Heart right ventricle (tissue), 16 donors: ENCODE measurements at regions of chr2 and their contacts with region 1.

Region 1: GRCh38 chr2:86072271-86072858 is 33.3 kb downstream of the POLR1A start:
- DNase-seq: peak; percentile 61 to 64
- ATAC-seq: peak; percentile 76 to 82 (median 80)
- H3K4me3 ChIP-seq: no peak overlapping the region
- H3K27ac ChIP-seq: peak overlapping the region in 9 of 10 donors; percentile 8 to 80 (median 56)
- H3K4me1 ChIP-seq: peaks cover 0 to 44% (median 19%) of the 10 kb centered on the region in 9 donors
- H3K27me3 ChIP-seq: no peaks in the 10 kb centered on the region
- CTCF ChIP-seq: no peak

Region 2: GRCh38 chr2:86025229-86025820 is 47.0 kb before region 1 on chr2:
- intact Hi-C with region 1: loop called in 2 of 10 experiments (anchors 5 kb)
- DNase-seq: no peak
- ATAC-seq: no peak
- H3K4me3 ChIP-seq: no peak overlapping the region
- H3K27ac ChIP-seq: peak overlapping the region in 1 of 10 donors; percentile 47
- H3K4me1 ChIP-seq: peaks cover 19 to 50% (median 34%) of the 10 kb centered on the region in 9 donors
- H3K27me3 ChIP-seq: peaks cover 0 to 9% (median 0%) of the 10 kb centered on the region in 7 donors
- CTCF ChIP-seq: no peak

Region 3: DNA sequence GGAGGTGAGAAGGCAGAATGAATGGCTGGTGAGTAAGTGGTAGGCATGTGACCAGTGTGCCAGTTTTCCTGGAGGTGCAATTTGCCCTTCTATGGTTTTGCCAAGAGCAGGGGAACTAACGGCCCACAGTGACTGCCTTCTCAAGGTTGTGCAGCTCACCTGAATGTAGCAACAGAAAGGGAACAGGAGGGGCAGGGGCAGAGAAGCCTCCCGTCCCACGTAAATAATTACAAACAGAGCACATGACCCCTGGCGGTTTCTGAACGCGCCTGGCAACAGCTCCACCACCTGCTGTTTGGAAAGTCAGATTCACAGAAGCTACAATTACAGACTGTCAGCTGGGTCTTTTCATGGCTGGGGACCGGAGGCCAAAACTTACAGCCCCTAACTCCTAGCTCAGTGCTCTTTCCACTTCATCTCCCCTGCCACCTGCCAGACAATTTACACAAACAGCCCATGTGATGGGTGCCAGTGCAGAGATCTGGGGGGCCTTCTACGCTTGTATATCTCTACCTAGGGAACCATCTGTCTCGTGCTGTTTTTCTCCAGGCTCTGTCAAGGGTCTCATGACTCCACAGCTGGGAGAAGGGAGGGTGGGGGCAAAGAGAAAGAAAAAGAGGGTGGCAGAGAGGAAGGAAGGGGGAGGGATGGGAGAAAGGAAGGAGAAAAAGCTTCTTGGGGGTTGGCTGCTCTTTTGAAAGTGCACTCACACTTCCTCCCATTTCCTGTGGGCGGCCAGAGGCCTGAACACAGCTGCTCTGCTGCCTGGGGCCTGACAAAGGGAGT is 36.3 kb before region 1 on chr2:
- intact Hi-C with region 1: loop called in 5 of 10 experiments (anchors 5 kb)
- DNase-seq: peak; percentile 75 to 86
- ATAC-seq: peak; percentile 72 to 90 (median 82)
- H3K4me3 ChIP-seq: peak overlapping the region in 2 of 10 donors; percentile 2 to 9
- H3K27ac ChIP-seq: peak overlapping the region; percentile 71 to 93 (median 84)
- H3K4me1 ChIP-seq: peaks cover 18 to 61% (median 52%) of the 10 kb centered on the region in 9 donors
- H3K27me3 ChIP-seq: no peaks in the 10 kb centered on the region
- CTCF ChIP-seq: peak in 4 of 9 donors; percentile 6 to 18 (median 9)

Region 4: GRCh38 chr2:86649119-86649947 is 577.0 kb after region 1 on chr2:
- intact Hi-C with region 1: no loop called
- DNase-seq: no peak
- ATAC-seq: no peak
- H3K4me3 ChIP-seq: no peak overlapping the region
- H3K27ac ChIP-seq: no peak overlapping the region
- H3K4me1 ChIP-seq: no peaks in the 10 kb centered on the region
- H3K27me3 ChIP-seq: no peaks in the 10 kb centered on the region
- CTCF ChIP-seq: no peak